ENCODE measurements at regions of chr19 and their contacts with region 1.

Region 1: GRCh38 chr19:13718733-13719132 is 45.6 kb upstream of the MRI1 start:
- DNase-seq: peak; percentile 30 to 66 (median 65)
- ATAC-seq: peak; percentile 54 to 81
- H3K4me3 ChIP-seq: no peak overlapping the region
- H3K27ac ChIP-seq: no peak overlapping the region
- H3K4me1 ChIP-seq: no peaks in the 10 kb centered on the region
- H3K27me3 ChIP-seq: no peaks in the 10 kb centered on the region

Region 2: GRCh38 chr19:13597640-13598039 is 121.1 kb before region 1 on chr19:
- intact Hi-C with region 1: loop called (anchors 1 to 10 kb)
- DNase-seq: peak in 1 of 3 donors; percentile 26
- ATAC-seq: peak; percentile 87
- H3K4me3 ChIP-seq: no peak overlapping the region
- H3K27ac ChIP-seq: no peak overlapping the region
- H3K4me1 ChIP-seq: no peaks in the 10 kb centered on the region
- H3K27me3 ChIP-seq: no peaks in the 10 kb centered on the region